Activated CD4-positive, alpha-beta memory T cell treated with anti-CD3 and anti-CD28 coated beads for 36 hours (primary cell): ENCODE measurements at regions of chr20 and their contacts with region 1.

Region 1: DNA sequence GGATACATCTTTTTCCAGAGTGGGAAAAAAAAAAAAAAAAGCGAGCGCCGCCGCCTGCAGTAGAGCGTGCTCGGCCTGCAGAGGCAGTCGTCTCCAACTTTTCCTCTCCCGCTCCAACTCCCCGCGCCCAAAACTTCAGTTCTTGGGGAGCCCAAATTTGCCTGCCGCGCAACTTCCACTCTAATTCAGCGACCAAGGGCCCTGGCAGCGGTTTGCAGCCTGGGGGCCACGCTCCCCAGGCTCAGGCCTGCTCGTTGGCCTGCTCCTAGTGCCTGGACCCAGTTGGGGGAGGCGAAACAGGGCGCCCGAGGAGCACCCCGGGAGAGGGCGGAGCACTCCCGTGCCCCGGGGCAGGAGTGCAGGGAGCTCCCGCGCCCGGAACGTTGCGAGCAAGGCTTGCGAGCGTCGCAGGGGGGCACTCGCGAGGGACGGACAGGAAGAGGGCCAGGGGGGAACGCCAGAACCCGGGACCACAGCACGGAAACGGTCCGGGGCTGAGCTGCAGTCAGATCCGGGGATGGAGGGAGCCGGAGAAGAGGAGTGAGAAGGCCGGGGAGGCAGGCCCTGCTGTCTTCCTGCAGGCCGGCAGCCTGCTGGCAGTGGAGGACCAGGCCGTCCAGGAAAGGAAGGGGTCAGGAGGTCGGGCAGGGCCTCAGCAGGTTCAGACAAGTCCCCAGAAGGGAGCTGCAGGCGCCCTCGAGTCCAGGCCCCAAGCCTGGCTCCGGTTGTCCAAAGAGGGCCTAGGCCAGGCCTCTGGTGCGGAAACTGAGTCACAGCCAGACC is at the start of gene STX16:
- DNase-seq: peak; percentile 93
- H3K4me3 Mint-ChIP-seq: peak within 1 kb of the TSS; percentile 99
- H3K27ac Mint-ChIP-seq: peak within 1 kb of the TSS; percentile 100
- H3K4me1 Mint-ChIP-seq: peaks cover 17% of the 10 kb centered on the region
- H3K27me3 Mint-ChIP-seq: no peaks in the 10 kb centered on the region
- total RNA-seq, gene STX16: 88.7 to 104 TPM

Region 2: GRCh38 chr20:58309575-58310290 is 341.2 kb before region 1 on chr20 and contains the start of gene RAB22A:
- CTCF ChIA-PET with region 1: interaction called, 8 read pairs
- POLR2A ChIA-PET with region 1: interaction called, 8 read pairs
- intact Hi-C with region 1: loop called (anchors 2 kb)
- DNase-seq: peak; percentile 85
- H3K4me3 Mint-ChIP-seq: peak within 1 kb of the TSS; percentile 90
- H3K27ac Mint-ChIP-seq: peak within 1 kb of the TSS; percentile 89
- H3K4me1 Mint-ChIP-seq: peaks cover 73% of the 10 kb centered on the region
- H3K27me3 Mint-ChIP-seq: no peaks in the 10 kb centered on the region
- total RNA-seq, gene RAB22A: 10.5 to 12.0 TPM

Region 3: DNA sequence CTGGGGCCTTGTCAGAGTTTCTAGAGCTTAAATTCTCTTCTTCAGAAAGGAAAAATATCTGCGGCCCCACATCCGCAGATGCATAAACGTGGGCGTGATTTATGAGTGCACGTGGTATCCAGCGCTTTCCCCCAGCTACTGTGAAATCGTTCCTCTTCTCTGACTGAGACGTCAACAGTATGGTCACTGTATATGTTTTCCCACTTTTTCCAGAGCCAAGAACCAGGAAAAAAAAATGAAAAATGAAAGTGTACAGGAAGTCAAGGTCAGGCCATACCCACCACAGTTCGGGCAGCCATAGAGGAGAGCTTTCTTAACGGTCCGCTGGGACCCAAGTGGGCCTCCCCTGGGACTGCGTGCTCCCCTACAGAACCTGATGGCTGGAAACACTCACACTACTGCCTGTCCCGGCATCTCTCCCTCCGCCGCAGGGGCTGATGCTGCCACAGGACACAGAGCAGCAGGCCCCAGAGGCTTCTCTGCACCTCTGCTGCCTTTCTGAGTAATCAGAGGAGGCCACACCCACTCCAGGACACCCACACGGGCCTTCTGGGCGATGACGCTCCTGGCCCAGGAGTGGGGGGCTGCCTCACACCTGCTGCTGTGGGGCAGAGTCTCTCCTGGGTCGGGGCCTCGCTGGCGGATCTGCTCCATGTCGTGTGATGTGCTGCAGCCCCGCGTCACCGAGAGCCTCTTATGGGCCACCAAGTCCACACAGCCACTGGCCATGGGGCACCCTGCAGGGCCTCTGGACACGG is 16.3 kb before region 1 on chr20:
- CTCF ChIA-PET with region 1: interaction called, 4 read pairs
- POLR2A ChIA-PET with region 1: interaction called, 3 read pairs
- intact Hi-C with region 1: loop called (anchors 1 kb)
- DNase-seq: peak; percentile 69
- H3K4me3 Mint-ChIP-seq: peak overlapping the region; percentile 23
- H3K27ac Mint-ChIP-seq: peak overlapping the region; percentile 71
- H3K4me1 Mint-ChIP-seq: peaks cover 17% of the 10 kb centered on the region
- H3K27me3 Mint-ChIP-seq: peaks cover 8% of the 10 kb centered on the region

Region 4: GRCh38 chr20:58850693-58851174 is 199.8 kb after region 1 on chr20 and contains the start of gene GNAS-AS1:
- CTCF ChIA-PET with region 1: interaction called, 4 read pairs
- POLR2A ChIA-PET with region 1: interaction called, 4 read pairs
- intact Hi-C with region 1: loop called (anchors 5 kb)
- DNase-seq: peak; percentile 90
- H3K4me3 Mint-ChIP-seq: peak within 1 kb of the TSS; percentile 86
- H3K27ac Mint-ChIP-seq: no peak within 1 kb of the TSS
- H3K4me1 Mint-ChIP-seq: peaks cover 28% of the 10 kb centered on the region
- H3K27me3 Mint-ChIP-seq: peaks cover 48% of the 10 kb centered on the region
- total RNA-seq, gene GNAS-AS1: 1.1 to 1.3 TPM

Region 5: GRCh38 chr20:59032023-59032712 is 381.2 kb after region 1 on chr20 and contains the start of gene ATP5F1E:
- CTCF ChIA-PET with region 1: interaction called, 4 read pairs
- POLR2A ChIA-PET with region 1: no interaction called
- intact Hi-C with region 1: loop called (anchors 2 kb)
- DNase-seq: peak; percentile 97
- H3K4me3 Mint-ChIP-seq: peak within 1 kb of the TSS; percentile 94
- H3K27ac Mint-ChIP-seq: peak within 1 kb of the TSS; percentile 94
- H3K4me1 Mint-ChIP-seq: peaks cover 73% of the 10 kb centered on the region
- H3K27me3 Mint-ChIP-seq: no peaks in the 10 kb centered on the region
- total RNA-seq, gene ATP5F1E: 82.2 to 90.4 TPM